GM10248 (cell line): ENCODE measurements at regions of chr14 and their contacts with region 1.

Region 1: DNA sequence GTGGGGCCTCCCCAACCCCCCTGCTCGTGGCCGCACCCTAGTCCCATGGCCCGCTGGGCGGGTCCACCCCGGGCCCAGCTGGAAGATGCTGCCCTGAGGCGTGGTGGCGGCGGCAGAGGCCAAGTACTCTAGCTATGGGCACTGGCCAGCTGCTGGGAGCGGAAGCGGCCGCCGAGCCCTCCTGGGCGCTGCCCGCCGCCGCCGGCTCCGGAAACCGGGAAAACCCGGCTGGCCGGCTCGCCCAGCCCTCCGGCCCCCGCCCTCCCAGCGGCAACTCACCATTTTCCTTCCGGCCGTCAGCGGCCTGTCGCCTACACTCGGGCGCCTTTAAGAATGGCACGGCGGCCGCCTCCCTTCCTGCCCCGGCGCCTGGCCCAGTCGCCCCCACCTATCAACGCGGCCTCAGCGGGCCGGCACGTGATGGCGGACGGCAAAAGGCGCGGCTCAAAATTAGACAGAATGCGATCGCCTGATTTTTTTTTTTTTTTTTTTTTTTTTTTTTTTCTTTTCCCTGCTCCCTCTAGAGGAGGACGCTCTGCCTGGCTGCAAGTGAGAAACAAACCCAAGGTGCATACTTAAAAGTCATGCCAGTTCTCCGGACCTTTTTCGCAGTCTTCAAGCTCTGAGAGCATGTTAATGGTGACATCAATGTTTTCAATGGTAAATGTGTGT is at the start of gene GMFB:
- DNase-seq: peak; percentile 93
- CTCF ChIP-seq: peak; percentile 25

Region 2: GRCh38 chr14:54085232-54085761 is 403.5 kb before region 1 on chr14:
- CTCF ChIA-PET with region 1: no interaction called
- POLR2A ChIA-PET with region 1: no interaction called
- DNase-seq: no peak
- CTCF ChIP-seq: no peak

Region 3: GRCh38 chr14:54509546-54510501 is 21.0 kb after region 1 on chr14 and contains the start of gene CGRRF1:
- CTCF ChIA-PET with region 1: interaction called, 50 read pairs
- POLR2A ChIA-PET with region 1: interaction called, 6 read pairs
- DNase-seq: peak; percentile 99
- CTCF ChIP-seq: peak; percentile 49

Region 4: GRCh38 chr14:54698966-54699530 is 210.3 kb after region 1 on chr14:
- CTCF ChIA-PET with region 1: no interaction called
- POLR2A ChIA-PET with region 1: no interaction called
- DNase-seq: no peak
- CTCF ChIP-seq: no peak